HepG2 (cell line): ENCODE measurements at regions of chr7 and their contacts with region 1.

Region 1: GRCh38 chr7:108146070-108146837 is 16.1 kb upstream of the LAMB4 start:
- DNase-seq: peak; percentile 72
- ATAC-seq: peak; percentile 89
- H3K4me3 ChIP-seq: no peak overlapping the region; a peak in 1 of 6 replicates
- H3K27ac ChIP-seq: no peak overlapping the region
- H3K4me1 ChIP-seq: no peaks in the 10 kb centered on the region
- H3K27me3 ChIP-seq: peaks cover 0 to 9% of the 10 kb centered on the region in 2 experiments; a peak in 1 of 5 replicates
- CTCF ChIP-seq: peak; percentile 86
- EP300 ChIP-seq: no peak
- POLR2A ChIP-seq: no peak
- RAD21 ChIP-seq: peak; percentile 89

Region 2: DNA sequence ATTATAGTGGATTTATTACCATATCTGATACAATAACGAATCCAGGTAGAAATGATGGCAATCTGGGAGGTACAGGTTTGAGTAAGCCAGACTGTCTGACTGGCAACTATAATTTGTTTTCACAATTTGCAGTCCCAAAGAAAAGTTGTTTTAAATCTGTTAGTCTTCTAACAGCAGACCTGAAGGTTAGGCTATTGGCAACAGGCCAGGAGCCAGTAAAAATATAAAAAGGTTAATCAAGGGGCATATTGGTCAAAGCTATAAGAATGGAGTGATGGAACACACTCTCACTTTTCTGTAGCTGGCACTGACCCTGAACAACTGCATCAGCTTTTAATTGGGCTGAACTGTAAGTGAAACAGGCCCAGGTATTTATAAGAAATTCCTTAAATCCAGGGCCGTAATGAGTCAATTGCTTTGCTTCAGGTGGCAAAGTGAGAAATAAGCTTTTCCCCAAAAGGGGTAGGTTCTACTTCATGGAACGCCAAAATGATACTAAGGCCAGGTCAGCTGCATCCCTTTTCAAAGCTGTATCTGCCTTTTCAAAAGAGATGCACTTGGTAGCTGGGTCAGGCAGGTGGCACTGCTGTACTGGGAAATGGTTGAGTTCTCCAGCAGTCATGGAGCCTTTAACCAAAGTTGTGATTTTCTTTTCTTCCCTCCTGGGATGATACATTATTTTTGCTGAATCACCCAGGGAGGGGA is 683.4 kb before region 1 on chr7:
- CTCF ChIA-PET with region 1: no interaction called
- POLR2A ChIA-PET with region 1: no interaction called
- in situ Hi-C with region 1: no loop called
- intact Hi-C with region 1: loop called (anchors 10 kb)
- DNase-seq: peak; percentile 52
- ATAC-seq: peak; percentile 94
- H3K4me3 ChIP-seq: no peak overlapping the region
- H3K27ac ChIP-seq: no peak overlapping the region
- H3K4me1 ChIP-seq: no peaks in the 10 kb centered on the region
- H3K27me3 ChIP-seq: no peaks in the 10 kb centered on the region
- CTCF ChIP-seq: peak; percentile 82
- EP300 ChIP-seq: no peak
- POLR2A ChIP-seq: no peak
- RAD21 ChIP-seq: peak; percentile 74

Region 3: DNA sequence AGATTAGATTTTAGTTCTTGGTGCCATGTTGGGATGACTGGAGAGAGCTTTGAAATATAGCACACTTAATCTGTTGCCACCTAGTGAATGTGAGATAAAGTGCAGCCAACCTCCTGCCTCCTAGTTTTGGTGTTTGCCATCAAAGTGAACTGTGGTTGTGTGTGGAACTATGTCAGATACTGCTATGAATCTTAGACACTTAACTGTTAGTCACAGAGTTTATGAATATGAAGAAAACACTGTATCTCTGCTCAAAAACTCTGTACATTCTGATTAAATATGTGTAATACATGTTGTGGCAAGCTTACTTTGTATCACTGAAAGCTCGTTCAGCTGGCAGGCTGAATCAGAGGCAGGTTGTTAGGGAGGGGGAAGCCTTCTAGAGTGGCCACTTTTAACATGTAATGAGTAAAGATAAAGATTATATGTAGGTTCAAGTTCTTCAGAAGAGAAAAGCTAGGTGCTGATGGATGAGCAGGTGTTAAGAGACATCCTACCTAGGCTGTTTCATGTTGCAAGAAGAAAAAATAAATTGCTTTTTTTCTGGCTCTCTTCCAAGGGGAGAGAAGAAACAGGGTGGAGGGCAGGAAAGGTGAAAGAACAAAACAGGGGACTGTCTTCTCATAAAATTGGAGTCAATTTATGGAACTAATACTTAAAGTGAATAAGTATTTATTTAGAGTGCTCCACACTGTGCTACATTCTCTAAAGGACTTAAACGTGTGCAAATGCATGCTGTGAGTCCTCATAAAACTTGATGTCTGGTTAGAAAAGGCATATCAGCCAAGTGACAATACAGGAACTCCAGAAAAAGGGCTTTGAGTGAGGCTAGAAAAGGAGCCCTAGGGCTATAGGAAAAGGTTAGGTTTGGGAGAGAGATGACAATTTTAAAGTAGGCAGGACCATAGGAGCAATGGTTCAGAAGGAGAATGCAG is 129.1 kb before region 1 on chr7:
- CTCF ChIA-PET with region 1: no interaction called
- POLR2A ChIA-PET with region 1: no interaction called
- in situ Hi-C with region 1: no loop called
- intact Hi-C with region 1: no loop called
- DNase-seq: peak; percentile 55
- ATAC-seq: peak; percentile 72
- H3K4me3 ChIP-seq: no peak overlapping the region
- H3K27ac ChIP-seq: no peak overlapping the region
- H3K4me1 ChIP-seq: peaks cover 68% of the 10 kb centered on the region
- H3K27me3 ChIP-seq: peaks cover 0 to 7% of the 10 kb centered on the region in 2 experiments; a peak in 3 of 5 replicates
- CTCF ChIP-seq: peak; percentile 66
- EP300 ChIP-seq: no peak
- POLR2A ChIP-seq: no peak
- RAD21 ChIP-seq: no peak

Region 4: GRCh38 chr7:108114117-108114841 is 32.0 kb before region 1 on chr7:
- CTCF ChIA-PET with region 1: interaction called, 10 read pairs
- POLR2A ChIA-PET with region 1: no interaction called
- in situ Hi-C with region 1: loop called (anchors 5 kb)
- intact Hi-C with region 1: loop called (anchors 1 kb)
- DNase-seq: peak; percentile 31
- ATAC-seq: peak; percentile 95
- H3K4me3 ChIP-seq: no peak overlapping the region
- H3K27ac ChIP-seq: no peak overlapping the region
- H3K4me1 ChIP-seq: peaks cover 4% of the 10 kb centered on the region; the same call in 1 of the 2 replicates
- H3K27me3 ChIP-seq: no peaks in the 10 kb centered on the region; a peak in 2 of 5 replicates
- CTCF ChIP-seq: peak; percentile 67
- EP300 ChIP-seq: no peak
- POLR2A ChIP-seq: no peak
- RAD21 ChIP-seq: peak; percentile 48; the same call in 1 of the 2 replicates

Region 5: GRCh38 chr7:108660460-108660859 is 514.2 kb after region 1 on chr7:
- CTCF ChIA-PET with region 1: no interaction called
- POLR2A ChIA-PET with region 1: no interaction called
- in situ Hi-C with region 1: no loop called
- intact Hi-C with region 1: no loop called
- DNase-seq: no peak
- ATAC-seq: no peak
- H3K4me3 ChIP-seq: no peak overlapping the region
- H3K27ac ChIP-seq: no peak overlapping the region
- H3K4me1 ChIP-seq: no peaks in the 10 kb centered on the region
- H3K27me3 ChIP-seq: no peaks in the 10 kb centered on the region
- CTCF ChIP-seq: no peak
- EP300 ChIP-seq: no peak
- POLR2A ChIP-seq: no peak
- RAD21 ChIP-seq: no peak